Calu3 (cell line): ENCODE measurements at regions of chr18 and their contacts with region 1.

Region 1: DNA sequence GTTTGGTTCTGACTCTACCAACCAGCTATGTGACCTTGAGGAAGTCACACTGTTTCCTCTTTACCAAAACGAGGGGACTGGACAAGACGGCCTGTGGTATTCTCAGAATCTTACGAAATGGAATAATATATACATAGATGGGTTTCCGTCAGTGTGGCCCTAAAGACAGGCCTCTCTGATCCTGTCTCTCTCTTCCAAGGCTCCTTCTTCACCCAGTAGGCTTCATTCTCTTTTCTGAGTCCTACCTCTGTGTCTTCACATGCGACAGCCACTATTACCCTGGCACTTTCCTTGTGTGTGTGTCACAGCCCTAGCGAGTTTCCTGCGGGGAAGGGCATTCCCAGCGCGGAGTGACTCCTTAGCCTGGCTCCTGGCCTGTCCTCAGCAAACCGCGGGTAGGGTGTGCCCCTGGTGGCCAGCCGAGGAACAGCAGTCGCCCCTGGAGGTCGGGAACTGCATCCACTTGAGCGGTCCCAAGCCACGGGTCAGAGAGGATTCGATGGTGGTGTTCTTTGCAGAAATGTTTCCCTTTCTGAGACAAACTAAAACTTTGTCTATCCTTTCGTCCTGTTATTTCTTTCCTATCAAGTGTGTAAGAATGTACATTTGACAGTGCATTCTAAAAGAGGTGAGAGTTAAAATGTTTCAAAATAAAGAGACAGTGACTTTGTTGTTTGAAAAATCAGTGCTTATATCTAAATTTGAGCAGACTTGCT is 63.3 kb downstream of the RAB31 start:
- DNase-seq: peak; percentile 92
- H3K4me3 Mint-ChIP-seq: no peak overlapping the region
- H3K27ac Mint-ChIP-seq: no peak overlapping the region
- H3K4me1 Mint-ChIP-seq: peaks cover 9% of the 10 kb centered on the region
- H3K27me3 Mint-ChIP-seq: peaks cover 14% of the 10 kb centered on the region
- CTCF ChIP-seq: peak; percentile 97

Region 2: DNA sequence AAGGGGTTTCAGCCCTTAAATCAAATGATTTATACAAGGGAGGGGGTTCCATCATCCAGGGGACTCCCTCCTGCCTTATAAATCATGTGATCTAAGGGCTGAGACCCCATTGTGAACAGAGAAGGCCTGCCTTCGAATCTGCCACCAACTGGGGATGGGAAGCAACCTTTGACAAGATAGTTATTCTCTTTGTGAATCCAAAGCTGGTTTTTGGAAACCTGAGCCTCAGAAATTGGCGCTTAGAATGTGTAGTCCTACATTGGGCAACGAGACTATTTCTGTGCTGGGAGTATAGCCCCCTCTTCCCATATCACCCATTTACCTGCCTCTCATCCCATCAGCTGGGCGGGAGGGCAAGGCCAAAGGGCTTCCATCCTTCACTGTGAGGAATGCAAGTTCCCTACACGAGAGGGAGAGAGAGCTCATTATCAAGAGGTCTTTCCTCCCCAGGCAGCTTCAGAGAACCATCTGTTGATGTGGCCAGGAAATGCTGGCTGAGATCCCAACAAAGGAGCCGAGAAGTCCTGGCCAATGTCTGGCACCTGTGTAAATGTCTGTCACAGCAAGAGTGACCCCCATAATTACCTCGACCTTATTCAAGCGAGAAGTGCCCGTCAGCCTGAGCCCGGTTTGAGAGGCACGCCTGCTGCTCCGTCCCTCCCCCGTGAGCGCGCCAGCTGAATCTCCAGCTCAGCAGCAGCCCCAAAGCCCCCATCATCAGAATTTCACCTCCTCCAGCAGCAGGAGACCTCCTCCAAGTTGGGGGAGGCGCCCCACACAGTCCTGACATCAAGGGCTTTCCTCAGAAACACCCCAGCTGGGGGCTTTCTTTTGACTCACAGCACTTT is 634.6 kb after region 1 on chr18:
- CTCF ChIA-PET with region 1: interaction called, 14 read pairs
- intact Hi-C with region 1: no loop called
- DNase-seq: no peak
- H3K4me3 Mint-ChIP-seq: no peak overlapping the region
- H3K27ac Mint-ChIP-seq: no peak overlapping the region
- H3K4me1 Mint-ChIP-seq: no peaks in the 10 kb centered on the region
- H3K27me3 Mint-ChIP-seq: peaks cover 54% of the 10 kb centered on the region
- CTCF ChIP-seq: no peak